AG04450 (cell line): ENCODE measurements at regions of chr19 and their contacts with region 1.

Region 1: DNA sequence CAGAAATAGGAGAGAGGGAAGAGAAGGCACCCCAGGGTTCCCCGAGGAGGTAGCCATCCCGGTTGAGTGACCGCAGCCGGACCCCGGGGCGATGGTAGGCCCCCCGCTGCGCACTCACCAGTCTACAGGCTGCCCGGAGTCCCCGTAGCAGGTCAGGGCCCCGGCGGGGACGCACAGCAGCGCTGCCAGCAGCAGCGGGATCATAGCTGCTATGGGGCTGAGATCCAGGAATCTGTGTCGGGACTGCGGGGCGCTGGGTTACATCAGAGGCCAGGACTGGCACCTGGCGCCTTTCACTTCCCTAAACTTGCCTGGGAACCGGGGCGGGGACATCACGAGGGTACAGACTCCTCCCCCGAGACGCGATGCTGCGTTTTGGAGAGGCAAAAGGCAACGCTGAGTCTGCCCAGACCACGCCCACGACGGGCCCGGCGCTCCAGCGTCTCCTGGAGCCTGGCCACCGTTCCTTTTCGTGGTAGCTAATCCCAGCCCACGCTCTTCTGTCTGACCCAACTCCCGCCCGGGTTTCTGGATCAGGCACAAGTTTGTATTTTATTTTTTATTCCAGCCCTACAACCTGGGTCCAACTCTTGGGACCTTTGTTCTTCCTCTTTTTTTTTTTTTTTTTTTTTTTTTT is at the start of gene DNASE2:
- DNase-seq: peak; percentile 76
- H3K4me3 ChIP-seq: peak within 1 kb of the TSS; percentile 82
- H3K27ac ChIP-seq: peak within 1 kb of the TSS; percentile 73
- H3K27me3 ChIP-seq: peaks cover 25% of the 10 kb centered on the region
- CTCF ChIP-seq: no peak
- polyA plus RNA-seq, gene DNASE2: 28.9 and 39.5 TPM in 2 replicates

Region 2: DNA sequence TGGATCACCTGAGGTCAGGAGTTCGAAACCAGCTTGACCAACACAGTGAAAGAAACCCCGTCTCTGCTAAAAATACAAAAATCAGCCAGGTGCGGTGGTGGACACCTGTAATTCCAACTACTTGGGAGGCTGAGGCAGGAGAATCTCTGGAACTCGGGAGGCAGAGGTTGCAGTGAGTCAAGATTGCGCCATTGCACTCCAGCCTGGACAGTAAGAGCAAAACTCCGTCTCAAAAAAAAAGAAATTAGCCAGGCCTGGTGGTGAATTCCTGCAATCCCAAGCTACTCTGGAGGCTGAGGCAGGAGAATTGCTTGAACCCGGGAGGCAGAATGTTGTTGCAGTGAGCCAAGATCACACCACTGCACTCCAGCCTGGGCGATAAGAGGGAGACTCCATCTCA is 172.6 kb before region 1 on chr19:
- CTCF ChIA-PET with region 1: no interaction called
- POLR2A ChIA-PET with region 1: no interaction called
- DNase-seq: no peak
- H3K4me3 ChIP-seq: no peak overlapping the region
- H3K27ac ChIP-seq: no peak overlapping the region
- H3K27me3 ChIP-seq: no peaks in the 10 kb centered on the region
- CTCF ChIP-seq: no peak

Region 3: DNA sequence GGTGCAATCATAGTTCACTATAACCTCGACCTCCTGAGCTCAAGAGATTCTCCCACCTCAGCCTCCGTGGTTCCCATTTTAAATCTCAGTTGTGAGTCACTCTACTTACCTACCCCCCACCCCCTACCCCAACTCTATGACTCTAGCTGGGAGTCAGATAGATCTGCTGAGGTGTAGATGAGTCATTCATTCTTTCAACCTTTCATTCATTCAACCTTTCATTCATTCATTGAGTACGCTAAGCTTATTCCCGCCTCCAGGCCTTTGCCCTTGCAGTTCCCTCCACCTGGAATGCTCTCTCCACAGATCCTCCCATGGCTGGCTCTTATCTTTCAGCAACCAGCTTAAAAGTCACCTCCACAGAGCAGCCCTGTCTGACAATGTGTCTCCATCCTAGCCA is 44.1 kb before region 1 on chr19:
- CTCF ChIA-PET with region 1: interaction called, 10 read pairs
- POLR2A ChIA-PET with region 1: no interaction called
- DNase-seq: no peak
- H3K4me3 ChIP-seq: no peak overlapping the region
- H3K27ac ChIP-seq: no peak overlapping the region
- H3K27me3 ChIP-seq: peaks cover 82% of the 10 kb centered on the region
- CTCF ChIP-seq: no peak